Motor neuron (in vitro differentiated cells): ENCODE measurements at regions of chr10 and their contacts with region 1.

Region 1: DNA sequence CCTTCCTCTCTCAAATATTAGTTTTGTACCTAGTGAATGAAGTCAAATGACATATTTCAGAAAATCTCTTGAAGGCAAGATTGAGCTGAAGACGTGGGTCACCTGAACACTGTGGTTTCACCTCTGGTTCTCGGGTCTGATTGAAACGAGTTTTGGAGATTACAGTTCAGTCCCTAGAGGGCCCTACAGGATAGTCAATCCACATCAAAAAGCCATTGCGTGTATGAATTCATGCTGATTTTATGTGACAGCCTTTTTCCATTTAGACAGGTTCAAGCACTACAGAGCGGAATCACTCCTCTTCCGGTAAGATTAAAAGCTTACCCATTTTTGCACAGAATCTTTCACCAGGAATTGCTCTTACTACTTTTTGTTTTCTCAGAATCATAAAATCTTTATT is 62.2 kb downstream of the VIM start:
- ATAC-seq: peak in 5 of 8 experiments; percentile 29 to 92 (median 82)
- H3K4me3 ChIP-seq: no peak overlapping the region
- H3K27ac ChIP-seq: no peak overlapping the region
- H3K4me1 ChIP-seq: peaks cover 0 to 4% of the 10 kb centered on the region in 2 donors

Region 2: GRCh38 chr10:17562614-17563013 is 272.4 kb after region 1 on chr10:
- in situ Hi-C with region 1: loop called in 1 of 9 experiments (anchors 25 kb)
- ATAC-seq: peak in 3 of 8 experiments; percentile 79 to 89 (median 81)
- H3K4me3 ChIP-seq: no peak overlapping the region
- H3K27ac ChIP-seq: no peak overlapping the region
- H3K4me1 ChIP-seq: peaks cover 0 to 5% of the 10 kb centered on the region in 2 donors

Region 3: GRCh38 chr10:17599089-17599488 is 308.9 kb after region 1 on chr10:
- in situ Hi-C with region 1: loop called in 1 of 9 experiments (anchors 25 kb)
- ATAC-seq: peak in 2 of 8 experiments; percentile 47 to 52
- H3K4me3 ChIP-seq: no peak overlapping the region
- H3K27ac ChIP-seq: no peak overlapping the region
- H3K4me1 ChIP-seq: no peaks in the 10 kb centered on the region